ENCODE measurements at regions of chr15 and their contacts with region 1.

Region 1: GRCh38 chr15:59528965-59529402 is 82.6 kb upstream of the GCNT3 start:
- DNase-seq: peak; percentile 81
- H3K4me3 ChIP-seq: no peak overlapping the region
- H3K27ac ChIP-seq: no peak overlapping the region
- H3K4me1 ChIP-seq: peaks cover 28% of the 10 kb centered on the region
- CTCF ChIP-seq: peak; percentile 95

Region 2: DNA sequence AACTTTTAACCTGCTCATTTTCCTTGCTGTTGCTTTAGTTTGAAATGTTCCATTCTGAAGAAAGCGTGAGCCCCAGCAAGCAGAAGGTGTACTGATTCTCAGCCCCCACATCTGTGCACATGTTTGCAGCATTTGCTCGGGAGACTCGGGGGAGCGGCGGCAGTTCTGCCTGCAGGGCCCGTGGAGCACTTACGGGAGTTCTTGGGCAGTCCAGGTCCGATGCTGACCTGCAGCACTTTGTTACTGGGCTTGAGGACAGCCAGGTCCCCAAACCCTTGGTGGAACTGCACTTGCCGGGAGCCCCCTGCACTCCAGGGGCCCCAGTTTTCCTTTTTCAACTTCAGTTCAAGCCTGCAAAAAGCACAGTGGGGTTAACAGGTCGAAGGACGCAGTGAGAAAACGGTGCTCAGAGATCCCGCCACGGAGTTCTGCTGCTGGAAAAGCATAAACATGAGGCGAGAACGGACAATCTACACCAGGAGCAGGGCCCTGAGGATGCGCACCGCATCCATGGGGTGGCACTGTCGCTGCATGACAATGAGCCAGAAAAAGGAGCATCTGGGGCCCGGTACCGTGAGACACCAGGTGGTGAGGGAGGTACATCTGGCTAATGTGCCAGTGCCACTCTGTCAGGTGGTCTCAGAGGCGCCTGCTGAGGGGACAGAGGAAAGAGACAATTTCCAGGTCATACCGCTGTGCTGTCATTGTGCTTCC is 367.9 kb before region 1 on chr15:
- CTCF ChIA-PET with region 1: no interaction called
- POLR2A ChIA-PET with region 1: no interaction called
- intact Hi-C with region 1: loop called (anchors 2 kb)
- DNase-seq: peak; percentile 35
- H3K4me3 ChIP-seq: no peak overlapping the region
- H3K27ac ChIP-seq: no peak overlapping the region
- H3K4me1 ChIP-seq: peaks cover 4% of the 10 kb centered on the region
- CTCF ChIP-seq: peak; percentile 73

Region 3: GRCh38 chr15:59313641-59314332 is 215.2 kb before region 1 on chr15:
- CTCF ChIA-PET with region 1: no interaction called
- POLR2A ChIA-PET with region 1: no interaction called
- intact Hi-C with region 1: no loop called
- DNase-seq: no peak
- H3K4me3 ChIP-seq: no peak overlapping the region
- H3K27ac ChIP-seq: no peak overlapping the region
- H3K4me1 ChIP-seq: no peaks in the 10 kb centered on the region
- CTCF ChIP-seq: no peak

Region 4: GRCh38 chr15:59516655-59517461 is 12.1 kb before region 1 on chr15:
- CTCF ChIA-PET with region 1: interaction called, 10 read pairs
- POLR2A ChIA-PET with region 1: interaction called, 23 read pairs
- intact Hi-C with region 1: no loop called
- DNase-seq: peak; percentile 73
- H3K4me3 ChIP-seq: peak overlapping the region; percentile 35
- H3K27ac ChIP-seq: peak overlapping the region; percentile 78
- H3K4me1 ChIP-seq: peaks cover 29% of the 10 kb centered on the region
- CTCF ChIP-seq: no peak

Region 5: DNA sequence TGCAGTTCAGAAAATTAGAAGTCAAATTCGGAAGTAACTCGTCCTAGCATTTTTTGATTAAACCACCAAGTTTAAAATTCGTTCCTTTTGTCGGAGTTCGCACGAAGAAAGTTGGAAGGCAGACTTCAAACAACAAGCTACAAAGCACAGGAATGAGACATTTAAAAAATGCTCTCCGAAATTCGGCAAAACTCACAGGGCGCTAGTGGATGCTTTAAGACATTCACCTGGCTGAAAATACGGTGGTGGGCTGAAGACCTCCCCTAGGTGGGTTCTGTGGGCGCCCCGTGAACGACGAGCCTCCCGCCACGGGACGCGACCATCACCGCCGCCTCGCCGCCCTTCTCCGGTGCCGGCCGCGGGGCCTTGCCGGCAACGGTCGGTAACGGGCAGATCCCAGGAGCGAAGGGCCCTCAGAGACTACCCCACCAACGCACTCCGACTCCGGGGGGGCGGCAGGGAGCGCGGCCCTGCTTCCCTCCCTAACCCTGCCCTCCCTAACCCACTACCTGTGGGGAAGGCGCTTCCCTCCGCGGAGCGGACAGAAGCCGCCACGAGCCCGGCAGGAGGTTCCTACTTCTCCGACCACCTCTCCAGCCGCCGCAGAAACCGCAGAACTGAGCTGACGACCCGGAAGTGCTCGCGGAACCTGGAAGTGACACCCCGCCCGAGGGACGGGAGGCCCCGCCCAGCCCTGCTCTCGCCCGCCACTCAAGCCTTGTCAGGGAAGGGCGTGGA is 128.1 kb after region 1 on chr15 and contains the start of gene GTF2A2:
- CTCF ChIA-PET with region 1: interaction called, 3 read pairs
- POLR2A ChIA-PET with region 1: no interaction called
- intact Hi-C with region 1: loop called (anchors 10 kb)
- DNase-seq: peak; percentile 96
- H3K4me3 ChIP-seq: peak within 1 kb of the TSS; percentile 95
- H3K27ac ChIP-seq: peak within 1 kb of the TSS; percentile 69
- H3K4me1 ChIP-seq: peaks cover 26% of the 10 kb centered on the region
- CTCF ChIP-seq: no peak
- total RNA-seq, gene GTF2A2: 50.5 and 69.3 TPM in 2 replicates

Region 6: DNA sequence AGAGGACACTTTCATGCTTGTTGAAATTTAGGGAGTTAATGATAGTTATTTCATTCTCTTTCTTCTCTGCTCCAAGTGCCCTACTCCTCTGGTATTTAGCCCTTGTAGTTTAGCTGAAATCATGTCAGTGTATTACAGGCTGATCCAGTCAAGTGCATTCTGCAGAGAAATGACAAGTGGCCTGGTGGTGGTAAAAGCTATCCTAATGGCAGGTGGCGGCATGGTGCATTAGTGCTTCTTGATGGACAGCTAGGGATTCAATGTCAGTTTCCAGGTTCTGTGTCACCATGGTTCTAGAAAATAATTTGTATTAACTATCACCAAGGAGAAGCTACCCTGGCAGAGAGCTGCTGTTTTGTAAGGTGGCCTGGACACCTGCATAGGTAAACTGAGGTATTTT is 250.1 kb after region 1 on chr15:
- CTCF ChIA-PET with region 1: no interaction called
- POLR2A ChIA-PET with region 1: no interaction called
- intact Hi-C with region 1: no loop called
- DNase-seq: no peak
- H3K4me3 ChIP-seq: no peak overlapping the region
- H3K27ac ChIP-seq: no peak overlapping the region
- H3K4me1 ChIP-seq: no peaks in the 10 kb centered on the region
- CTCF ChIP-seq: no peak

Region 7: DNA sequence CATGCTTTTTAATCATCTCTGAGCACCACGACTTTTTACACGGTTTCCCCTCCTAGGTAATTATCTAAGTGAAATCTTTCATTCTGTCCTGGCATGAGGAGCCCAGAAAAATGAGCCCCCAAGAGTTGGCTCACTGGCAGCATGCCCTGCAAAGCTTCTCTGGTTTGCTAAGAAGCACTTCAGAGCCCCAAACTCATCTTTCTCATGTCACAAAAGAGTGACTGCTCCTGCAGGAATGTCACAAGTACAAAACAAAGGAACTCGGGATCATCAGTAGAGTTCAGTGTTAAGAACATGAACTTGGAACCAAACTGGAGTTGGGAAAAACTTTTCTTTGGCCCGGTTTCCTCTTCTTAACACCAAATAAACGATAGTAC is 599.0 kb after region 1 on chr15:
- CTCF ChIA-PET with region 1: no interaction called
- POLR2A ChIA-PET with region 1: no interaction called
- intact Hi-C with region 1: loop called (anchors 10 kb)
- DNase-seq: no peak
- H3K4me3 ChIP-seq: peak overlapping the region; percentile 66
- H3K27ac ChIP-seq: peak overlapping the region; percentile 22
- H3K4me1 ChIP-seq: peaks cover 17% of the 10 kb centered on the region
- CTCF ChIP-seq: no peak